Gastrocnemius medialis (tissue), 4 donors: ENCODE measurements at regions of chr7 and their contacts with region 1.

Region 1: GRCh38 chr7:47273974-47274766 is 307.7 kb downstream of the TNS3 start:
- DNase-seq: no peak
- ATAC-seq: no peak
- H3K4me3 ChIP-seq: no peak overlapping the region
- H3K27ac ChIP-seq: no peak overlapping the region
- H3K4me1 ChIP-seq: no peaks in the 10 kb centered on the region
- H3K27me3 ChIP-seq: no peaks in the 10 kb centered on the region
- CTCF ChIP-seq: no peak
- POLR2A ChIP-seq: no peak

Region 2: GRCh38 chr7:47186316-47186715 is 87.9 kb before region 1 on chr7:
- in situ Hi-C with region 1: no loop called
- intact Hi-C with region 1: no loop called
- DNase-seq: no peak
- ATAC-seq: no peak
- H3K4me3 ChIP-seq: no peak overlapping the region
- H3K27ac ChIP-seq: no peak overlapping the region
- H3K4me1 ChIP-seq: peaks cover 33 to 41% of the 10 kb centered on the region in 2 donors
- H3K27me3 ChIP-seq: no peaks in the 10 kb centered on the region
- CTCF ChIP-seq: no peak
- POLR2A ChIP-seq: no peak

Region 3: GRCh38 chr7:47571331-47572093 is 297.3 kb after region 1 on chr7:
- in situ Hi-C with region 1: no loop called
- intact Hi-C with region 1: loop called (anchors 5 kb)
- DNase-seq: peak in 1 of 2 donors; percentile 37
- ATAC-seq: peak; percentile 36 to 39
- H3K4me3 ChIP-seq: peak overlapping the region in 3 of 4 donors; percentile 10 to 49 (median 20)
- H3K27ac ChIP-seq: peak overlapping the region; percentile 45 to 63 (median 61)
- H3K4me1 ChIP-seq: peaks cover 20 to 22% of the 10 kb centered on the region in 2 donors
- H3K27me3 ChIP-seq: no peaks in the 10 kb centered on the region
- CTCF ChIP-seq: no peak
- POLR2A ChIP-seq: no peak